ENCODE measurements at regions of chr12 and their contacts with region 1.

Region 1: GRCh38 chr12:53160000-53160399 is 20.5 kb upstream of the ZNF740 start:
- DNase-seq: no peak
- H3K4me3 ChIP-seq: no peak overlapping the region
- H3K27ac ChIP-seq: no peak overlapping the region
- H3K4me1 ChIP-seq: no peaks in the 10 kb centered on the region
- H3K27me3 ChIP-seq: no peaks in the 10 kb centered on the region
- CTCF ChIP-seq: no peak
- POLR2A ChIP-seq: no peak

Region 2: GRCh38 chr12:53198486-53199110 is 38.6 kb after region 1 on chr12:
- intact Hi-C with region 1: loop called (anchors 5 kb)
- DNase-seq: no peak
- H3K4me3 ChIP-seq: no peak overlapping the region
- H3K27ac ChIP-seq: no peak overlapping the region
- H3K4me1 ChIP-seq: peaks cover 7 to 13% of the 10 kb centered on the region in 2 donors
- H3K27me3 ChIP-seq: no peaks in the 10 kb centered on the region
- CTCF ChIP-seq: no peak
- POLR2A ChIP-seq: no peak

Region 3: GRCh38 chr12:53208877-53209463 is 49.0 kb after region 1 on chr12:
- intact Hi-C with region 1: no loop called
- DNase-seq: no peak
- H3K4me3 ChIP-seq: no peak overlapping the region
- H3K27ac ChIP-seq: no peak overlapping the region
- H3K4me1 ChIP-seq: no peaks in the 10 kb centered on the region
- H3K27me3 ChIP-seq: no peaks in the 10 kb centered on the region
- CTCF ChIP-seq: no peak
- POLR2A ChIP-seq: no peak